MCF 10A (cell line): ENCODE measurements at regions of chr2 and their contacts with region 1.

Region 1: DNA sequence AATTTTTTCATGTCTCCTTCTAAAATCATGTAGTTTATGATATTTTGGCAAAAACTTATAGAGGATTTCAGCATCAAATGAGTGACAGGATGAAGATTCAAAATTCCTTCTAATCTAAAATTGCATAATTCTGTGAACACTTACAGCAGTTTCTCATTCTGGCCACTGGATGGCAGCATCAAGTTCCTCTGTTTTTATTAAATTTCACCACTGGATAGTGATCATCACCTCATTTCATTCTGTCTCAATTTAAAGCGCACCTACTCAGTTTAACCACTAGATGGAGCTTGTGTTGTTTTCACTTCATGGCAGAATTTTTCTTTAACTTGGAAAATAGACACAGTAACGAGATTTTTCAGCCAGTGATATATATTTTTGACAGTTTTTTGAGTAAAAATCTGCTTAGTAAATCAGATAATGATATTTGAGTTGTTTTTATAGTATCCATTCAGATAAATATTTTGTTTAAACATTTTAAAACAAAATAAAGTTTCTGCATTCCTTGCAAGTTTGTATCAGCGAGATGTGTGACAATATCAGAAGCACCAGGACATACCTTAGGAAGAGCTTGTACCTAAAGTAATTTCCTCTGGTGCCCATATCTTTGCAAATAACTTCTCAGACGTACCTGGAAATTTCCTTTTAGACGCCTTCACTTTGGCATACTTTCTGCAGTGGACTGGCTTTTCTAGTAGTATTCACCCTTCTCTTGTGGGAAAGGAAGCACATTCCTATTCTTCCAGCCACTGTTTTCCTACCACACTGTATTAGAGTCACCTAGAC is 94.7 kb upstream of the ARHGAP15 start:
- DNase-seq: peak; percentile 82
- H3K4me3 Mint-ChIP-seq: no peak overlapping the region
- H3K27ac Mint-ChIP-seq: no peak overlapping the region
- H3K4me1 Mint-ChIP-seq: no peaks in the 10 kb centered on the region
- H3K27me3 Mint-ChIP-seq: no peaks in the 10 kb centered on the region
- CTCF ChIP-seq: peak; percentile 79

Region 2: DNA sequence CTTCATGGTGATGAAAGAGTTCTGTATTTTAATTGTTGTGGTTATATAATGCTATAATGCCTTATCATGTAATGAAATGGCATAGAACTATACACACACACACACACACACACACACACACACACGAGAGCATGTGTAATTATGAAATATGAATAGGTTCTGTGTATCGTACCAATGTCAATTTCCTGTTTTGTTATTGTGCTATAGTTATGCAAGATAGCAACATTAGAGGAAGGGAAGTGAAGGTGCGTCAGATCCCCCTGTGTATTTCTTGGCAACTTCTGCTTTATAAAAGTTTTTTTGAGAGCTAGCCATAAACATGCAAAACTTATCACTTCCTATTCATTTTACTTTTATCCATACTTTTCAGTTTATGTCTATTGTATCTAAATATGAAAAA is 34.0 kb after region 1 on chr2:
- CTCF ChIA-PET with region 1: interaction called, 20 read pairs
- POLR2A ChIA-PET with region 1: interaction called, 5 read pairs
- intact Hi-C with region 1: loop called (anchors 1 kb)
- DNase-seq: peak; percentile 42
- H3K4me3 Mint-ChIP-seq: no peak overlapping the region
- H3K27ac Mint-ChIP-seq: no peak overlapping the region
- H3K4me1 Mint-ChIP-seq: peaks cover 14% of the 10 kb centered on the region
- H3K27me3 Mint-ChIP-seq: no peaks in the 10 kb centered on the region
- CTCF ChIP-seq: no peak

Region 3: GRCh38 chr2:143217512-143218115 is 183.1 kb after region 1 on chr2:
- CTCF ChIA-PET with region 1: interaction called, 4 read pairs
- POLR2A ChIA-PET with region 1: no interaction called
- intact Hi-C with region 1: loop called (anchors 1 kb)
- DNase-seq: no peak
- H3K4me3 Mint-ChIP-seq: no peak overlapping the region
- H3K27ac Mint-ChIP-seq: no peak overlapping the region
- H3K4me1 Mint-ChIP-seq: no peaks in the 10 kb centered on the region
- H3K27me3 Mint-ChIP-seq: no peaks in the 10 kb centered on the region
- CTCF ChIP-seq: no peak